ENCODE measurements at regions of chr15 and their contacts with region 1.

Region 1: GRCh38 chr15:57706405-57707209 is at the start of gene POLR2M:
- DNase-seq: peak; percentile 67 to 97 (median 91)
- ATAC-seq: peak; percentile 94
- H3K4me3 ChIP-seq: peak within 1 kb of the TSS; percentile 88
- H3K4me3 Mint-ChIP-seq: peak within 1 kb of the TSS; percentile 83 to 93 (median 89)
- H3K27ac ChIP-seq: peak within 1 kb of the TSS; percentile 92
- H3K27ac Mint-ChIP-seq: peak within 1 kb of the TSS; percentile 63 to 99 (median 97)
- H3K4me1 ChIP-seq: peaks cover 17 to 38% of the 10 kb centered on the region in 2 donors
- H3K4me1 Mint-ChIP-seq: peaks cover 51 to 96% (median 94%) of the 10 kb centered on the region in 7 donors
- H3K27me3 ChIP-seq: no peaks in the 10 kb centered on the region
- H3K27me3 Mint-ChIP-seq: peaks cover 0 to 3% (median 0%) of the 10 kb centered on the region in 5 donors
- total RNA-seq, gene POLR2M: 67.0 to 105 (median 82.9) TPM

Region 2: GRCh38 chr15:57591646-57592367 is 114.8 kb before region 1 on chr15 and contains the start of gene MYZAP:
- CTCF ChIA-PET with region 1: no interaction called
- POLR2A ChIA-PET with region 1: interaction called, 24 read pairs
- intact Hi-C with region 1: loop called in 1 of 2 experiments (anchors 2 kb)
- DNase-seq: peak; percentile 19 to 65 (median 51)
- ATAC-seq: peak; percentile 87
- H3K4me3 ChIP-seq: peak within 1 kb of the TSS; percentile 50
- H3K4me3 Mint-ChIP-seq: peak within 1 kb of the TSS; percentile 60 to 86 (median 82)
- H3K27ac ChIP-seq: peak within 1 kb of the TSS; percentile 15
- H3K27ac Mint-ChIP-seq: peak within 1 kb of the TSS in 8 of 9 donors; percentile 25 to 92 (median 79)
- H3K4me1 ChIP-seq: peaks cover 0 to 36% of the 10 kb centered on the region in 2 donors
- H3K4me1 Mint-ChIP-seq: peaks cover 18 to 70% (median 56%) of the 10 kb centered on the region in 7 donors
- H3K27me3 ChIP-seq: no peaks in the 10 kb centered on the region
- H3K27me3 Mint-ChIP-seq: peaks cover 0 to 47% (median 19%) of the 10 kb centered on the region in 5 donors
- total RNA-seq, gene MYZAP: 1.1 to 2.2 (median 1.7) TPM in 4 of 5 experiments, not detected in the other

Region 3: GRCh38 chr15:57640935-57641682 is 65.5 kb before region 1 on chr15:
- CTCF ChIA-PET with region 1: interaction called, 5 read pairs
- POLR2A ChIA-PET with region 1: interaction called, 4 read pairs
- intact Hi-C with region 1: loop called in 1 of 2 experiments (anchors 2 kb)
- DNase-seq: peak in 7 of 9 donors; percentile 10 to 36 (median 16)
- ATAC-seq: peak; percentile 32
- H3K4me3 ChIP-seq: no peak overlapping the region
- H3K4me3 Mint-ChIP-seq: no peak overlapping the region
- H3K27ac ChIP-seq: no peak overlapping the region
- H3K27ac Mint-ChIP-seq: peak overlapping the region in 1 of 9 donors; percentile 23
- H3K4me1 ChIP-seq: no peaks in the 10 kb centered on the region
- H3K4me1 Mint-ChIP-seq: peaks cover 0 to 11% (median 4%) of the 10 kb centered on the region in 7 donors
- H3K27me3 ChIP-seq: no peaks in the 10 kb centered on the region
- H3K27me3 Mint-ChIP-seq: peaks cover 0 to 7% (median 0%) of the 10 kb centered on the region in 5 donors

Region 4: GRCh38 chr15:57667171-57667849 is 39.3 kb before region 1 on chr15:
- CTCF ChIA-PET with region 1: interaction called, 3 read pairs
- POLR2A ChIA-PET with region 1: interaction called, 4 read pairs
- intact Hi-C with region 1: loop called in 1 of 2 experiments (anchors 2 kb)
- DNase-seq: peak in 2 of 9 donors; percentile 4 to 8
- ATAC-seq: no peak
- H3K4me3 ChIP-seq: no peak overlapping the region
- H3K4me3 Mint-ChIP-seq: no peak overlapping the region
- H3K27ac ChIP-seq: no peak overlapping the region
- H3K27ac Mint-ChIP-seq: no peak overlapping the region
- H3K4me1 ChIP-seq: no peaks in the 10 kb centered on the region
- H3K4me1 Mint-ChIP-seq: peaks cover 0 to 2% (median 0%) of the 10 kb centered on the region in 7 donors
- H3K27me3 ChIP-seq: no peaks in the 10 kb centered on the region
- H3K27me3 Mint-ChIP-seq: peaks cover 0 to 36% (median 0%) of the 10 kb centered on the region in 5 donors

Measured in naive thymus-derived CD4-positive, alpha-beta T cell (primary cell).